Astrocyte of the cerebellum (primary cell): ENCODE measurements at regions of chr10 and their contacts with region 1.

Region 1: GRCh38 chr10:68010426-68010940 is 64.6 kb downstream of the HERC4 start:
- DNase-seq: no peak
- H3K4me3 ChIP-seq: no peak overlapping the region
- CTCF ChIP-seq: no peak

Region 2: DNA sequence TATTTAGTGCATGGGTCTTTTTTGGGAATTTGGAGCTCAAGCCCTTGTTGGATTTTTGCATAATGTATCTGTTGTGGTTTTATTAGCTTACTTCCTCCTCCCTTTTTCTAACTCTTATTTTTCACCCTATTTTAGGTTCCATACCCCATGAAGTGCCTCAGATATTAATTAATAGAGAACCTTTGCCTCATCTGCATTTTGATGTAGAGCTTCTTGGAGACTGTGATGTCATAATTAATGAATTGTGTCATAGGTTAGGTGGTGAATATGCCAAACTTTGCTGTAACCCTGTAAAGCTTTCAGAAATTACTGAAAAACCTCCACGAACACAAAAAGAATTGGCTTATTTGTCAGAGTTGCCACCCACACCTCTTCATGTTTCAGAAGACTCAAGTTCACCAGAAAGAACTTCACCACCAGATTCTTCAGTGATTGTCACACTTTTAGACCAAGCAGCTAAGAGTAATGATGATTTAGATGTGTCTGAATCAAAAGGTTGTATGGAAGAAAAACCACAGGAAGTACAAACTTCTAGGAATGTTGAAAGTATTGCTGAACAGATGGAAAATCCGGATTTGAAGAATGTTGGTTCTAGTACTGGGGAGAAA is 98.0 kb before region 1 on chr10:
- in situ Hi-C with region 1: loop called (anchors 5 kb)
- DNase-seq: no peak
- H3K4me3 ChIP-seq: no peak overlapping the region
- CTCF ChIP-seq: no peak

Region 3: DNA sequence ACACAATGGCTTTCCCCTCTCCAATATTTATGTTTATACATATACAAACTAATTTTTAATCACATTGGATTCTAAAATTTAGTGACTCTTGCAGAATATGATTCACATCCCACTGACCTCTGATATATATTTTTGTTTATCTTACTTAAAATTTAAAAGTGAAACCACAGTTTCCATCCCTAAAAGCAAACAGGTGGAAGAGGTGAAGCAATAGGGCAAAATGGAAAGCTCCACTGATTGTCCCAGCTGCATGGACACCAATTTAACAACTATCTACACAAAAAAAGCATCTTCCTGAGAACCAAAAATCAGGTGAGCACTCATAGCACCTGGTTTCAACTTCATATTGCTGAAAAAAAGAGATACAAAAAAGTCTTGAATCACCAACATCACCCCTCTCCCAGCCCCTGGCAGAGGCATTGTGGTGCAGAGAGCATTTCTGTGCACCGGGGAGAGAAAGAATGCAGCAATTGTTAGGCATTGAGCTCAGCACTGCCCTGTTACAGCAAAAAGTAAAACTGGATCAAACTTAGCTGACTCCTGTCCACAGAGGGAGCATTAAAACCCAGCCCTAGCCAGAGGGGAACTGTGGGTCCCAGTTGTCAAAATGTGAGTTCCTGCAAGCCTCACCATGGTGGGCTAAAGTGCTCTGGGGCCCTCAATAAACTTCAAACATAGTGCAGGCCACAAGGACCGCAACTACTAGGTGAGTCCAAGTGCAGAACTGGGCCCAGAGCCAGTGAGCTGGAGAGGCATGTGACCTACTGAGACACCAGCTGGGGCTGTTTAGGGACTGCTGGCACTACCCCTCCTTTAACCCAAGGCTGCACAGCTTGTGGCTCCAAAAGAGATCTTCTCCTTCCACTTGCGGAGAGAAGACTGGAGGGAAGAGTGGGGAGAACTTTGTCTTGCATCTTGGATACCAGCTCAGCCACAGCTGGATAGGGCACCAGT is 33.9 kb before region 1 on chr10:
- in situ Hi-C with region 1: no loop called
- DNase-seq: peak; percentile 2
- H3K4me3 ChIP-seq: no peak overlapping the region
- CTCF ChIP-seq: no peak